ENCODE measurements at regions of chr9 and their contacts with region 1.

Region 1: GRCh38 chr9:127336086-127336485 is 60.9 kb upstream of the SLC2A8 start:
- DNase-seq: no peak
- ATAC-seq: no peak
- H3K4me3 ChIP-seq: no peak overlapping the region
- H3K4me3 Mint-ChIP-seq: no peak overlapping the region
- H3K27ac ChIP-seq: no peak overlapping the region
- H3K27ac Mint-ChIP-seq: no peak overlapping the region
- H3K4me1 ChIP-seq: no peaks in the 10 kb centered on the region
- H3K4me1 Mint-ChIP-seq: no peaks in the 10 kb centered on the region
- H3K27me3 ChIP-seq: no peaks in the 10 kb centered on the region
- H3K27me3 Mint-ChIP-seq: no peaks in the 10 kb centered on the region
- CTCF ChIP-seq: no peak

Region 2: GRCh38 chr9:127214421-127215267 is 121.4 kb before region 1 on chr9:
- CTCF ChIA-PET with region 1: no interaction called
- POLR2A ChIA-PET with region 1: no interaction called
- intact Hi-C with region 1: no loop called
- DNase-seq: peak; percentile 73
- ATAC-seq: peak; percentile 85
- H3K4me3 ChIP-seq: no peak overlapping the region
- H3K4me3 Mint-ChIP-seq: no peak overlapping the region
- H3K27ac ChIP-seq: no peak overlapping the region
- H3K27ac Mint-ChIP-seq: no peak overlapping the region
- H3K4me1 ChIP-seq: peaks cover 0 to 3% of the 10 kb centered on the region in 2 donors
- H3K4me1 Mint-ChIP-seq: peaks cover 4% of the 10 kb centered on the region
- H3K27me3 ChIP-seq: no peaks in the 10 kb centered on the region
- H3K27me3 Mint-ChIP-seq: no peaks in the 10 kb centered on the region
- CTCF ChIP-seq: peak; percentile 85

Region 3: GRCh38 chr9:127318651-127319167 is 17.4 kb before region 1 on chr9:
- CTCF ChIA-PET with region 1: no interaction called
- POLR2A ChIA-PET with region 1: interaction called, 10 read pairs
- intact Hi-C with region 1: no loop called
- DNase-seq: no peak
- ATAC-seq: no peak
- H3K4me3 ChIP-seq: no peak overlapping the region
- H3K4me3 Mint-ChIP-seq: no peak overlapping the region
- H3K27ac ChIP-seq: no peak overlapping the region
- H3K27ac Mint-ChIP-seq: no peak overlapping the region
- H3K4me1 ChIP-seq: peaks cover 0 to 9% of the 10 kb centered on the region in 2 donors
- H3K4me1 Mint-ChIP-seq: peaks cover 9% of the 10 kb centered on the region
- H3K27me3 ChIP-seq: no peaks in the 10 kb centered on the region
- H3K27me3 Mint-ChIP-seq: no peaks in the 10 kb centered on the region
- CTCF ChIP-seq: no peak